ENCODE measurements at regions of chr1 and their contacts with region 1.

Region 1: GRCh38 chr1:167763525-167764220 is 41.9 kb downstream of the MPZL1 start:
- DNase-seq: no peak
- H3K4me3 Mint-ChIP-seq: no peak overlapping the region
- H3K27ac Mint-ChIP-seq: no peak overlapping the region
- H3K4me1 Mint-ChIP-seq: peaks cover 20% of the 10 kb centered on the region
- H3K27me3 Mint-ChIP-seq: no peaks in the 10 kb centered on the region

Region 2: DNA sequence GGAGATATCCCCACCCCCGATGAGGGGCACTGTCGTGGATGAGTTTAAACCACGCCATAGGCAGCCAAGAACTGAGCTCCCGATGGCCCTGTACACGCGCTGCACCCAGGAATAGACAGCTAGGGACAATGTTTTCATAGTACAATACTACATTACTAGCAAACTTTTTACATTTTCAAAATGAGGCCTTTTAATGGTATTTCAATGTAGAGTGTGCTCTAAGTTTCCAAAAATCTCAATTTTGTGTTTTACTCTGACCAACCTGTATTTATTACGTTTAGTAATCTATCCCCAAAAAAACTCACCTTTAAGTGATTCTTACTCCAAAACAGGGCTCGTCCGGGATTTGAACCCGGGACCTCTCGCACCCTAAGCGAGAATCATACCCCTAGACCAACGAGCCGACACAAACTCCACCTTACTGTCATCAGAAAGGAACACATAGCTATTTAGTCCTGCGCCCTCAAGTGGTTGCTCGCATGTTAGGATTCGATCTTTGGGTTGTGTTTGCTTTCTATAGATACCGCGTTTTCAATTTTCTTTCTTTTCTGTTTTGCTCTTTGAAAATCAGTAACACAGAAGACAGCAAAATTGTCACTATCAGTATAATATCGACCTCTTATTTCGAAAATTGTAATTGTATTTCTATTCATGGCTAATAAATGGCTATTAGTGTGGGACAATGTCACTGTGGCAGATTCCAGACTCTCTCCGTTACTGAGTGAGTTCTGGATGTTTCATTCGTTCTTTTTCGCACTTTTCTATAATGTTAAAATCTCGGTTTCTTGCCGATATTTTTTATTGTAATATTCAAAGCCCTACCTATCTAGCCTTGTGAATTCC is 48.3 kb before region 1 on chr1:
- CTCF ChIA-PET with region 1: interaction called, 7 read pairs
- intact Hi-C with region 1: loop called (anchors 1 kb)
- DNase-seq: peak; percentile 95
- H3K4me3 Mint-ChIP-seq: peak overlapping the region; percentile 79
- H3K27ac Mint-ChIP-seq: peak overlapping the region; percentile 92
- H3K4me1 Mint-ChIP-seq: peaks cover 28% of the 10 kb centered on the region
- H3K27me3 Mint-ChIP-seq: peaks cover 5% of the 10 kb centered on the region

Region 3: DNA sequence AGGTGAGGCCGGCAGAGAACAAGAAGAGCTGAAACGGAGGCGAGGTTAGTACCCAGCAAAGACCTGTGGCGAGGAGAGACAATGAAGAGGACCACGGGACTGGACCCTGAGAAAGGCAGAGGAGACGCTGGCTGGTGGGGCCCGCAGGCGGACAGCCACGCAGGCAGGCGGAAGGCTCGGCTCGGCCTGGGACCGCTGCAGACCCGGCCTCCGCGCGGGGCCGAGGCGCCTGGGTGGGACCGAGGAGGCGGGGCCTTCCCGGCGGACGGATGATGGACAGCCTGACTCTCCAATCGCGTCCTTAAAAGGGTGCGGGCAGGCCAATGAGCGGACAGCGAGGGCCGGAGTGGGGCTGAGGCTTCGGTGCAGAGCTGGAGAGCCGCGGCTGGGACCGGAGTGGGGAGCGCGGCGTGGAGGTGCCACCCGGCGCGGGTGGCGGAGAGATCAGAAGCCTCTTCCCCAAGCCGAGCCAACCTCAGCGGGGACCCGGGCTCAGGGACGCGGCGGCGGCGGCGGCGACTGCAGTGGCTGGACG is 42.0 kb before region 1 on chr1 and contains the start of gene MPZL1:
- CTCF ChIA-PET with region 1: interaction called, 7 read pairs
- intact Hi-C with region 1: loop called (anchors 1 kb)
- DNase-seq: peak; percentile 94
- H3K4me3 Mint-ChIP-seq: peak within 1 kb of the TSS; percentile 89
- H3K27ac Mint-ChIP-seq: peak within 1 kb of the TSS; percentile 65
- H3K4me1 Mint-ChIP-seq: peaks cover 57% of the 10 kb centered on the region
- H3K27me3 Mint-ChIP-seq: no peaks in the 10 kb centered on the region
- total RNA-seq, gene MPZL1: 24.2 to 28.1 TPM

Region 4: GRCh38 chr1:167774710-167775109 is 11.0 kb after region 1 on chr1:
- CTCF ChIA-PET with region 1: interaction called, 10 read pairs
- intact Hi-C with region 1: loop called (anchors 1 kb)
- DNase-seq: no peak
- H3K4me3 Mint-ChIP-seq: no peak overlapping the region
- H3K27ac Mint-ChIP-seq: no peak overlapping the region
- H3K4me1 Mint-ChIP-seq: peaks cover 32% of the 10 kb centered on the region
- H3K27me3 Mint-ChIP-seq: no peaks in the 10 kb centered on the region

Measured in activated naive CD4-positive, alpha-beta T cell treated with anti-CD3 and anti-CD28 coated beads for 36 hours (primary cell).